ENCODE measurements at regions of chr2 and their contacts with region 1.

Region 1: GRCh38 chr2:55961318-55961911 is 37.8 kb upstream of the EFEMP1 start:
- DNase-seq: peak; percentile 54
- H3K4me3 ChIP-seq: no peak overlapping the region
- H3K27ac ChIP-seq: no peak overlapping the region
- H3K4me1 ChIP-seq: no peaks in the 10 kb centered on the region
- H3K27me3 ChIP-seq: peaks cover 16% of the 10 kb centered on the region
- CTCF ChIP-seq: peak; percentile 74

Region 2: DNA sequence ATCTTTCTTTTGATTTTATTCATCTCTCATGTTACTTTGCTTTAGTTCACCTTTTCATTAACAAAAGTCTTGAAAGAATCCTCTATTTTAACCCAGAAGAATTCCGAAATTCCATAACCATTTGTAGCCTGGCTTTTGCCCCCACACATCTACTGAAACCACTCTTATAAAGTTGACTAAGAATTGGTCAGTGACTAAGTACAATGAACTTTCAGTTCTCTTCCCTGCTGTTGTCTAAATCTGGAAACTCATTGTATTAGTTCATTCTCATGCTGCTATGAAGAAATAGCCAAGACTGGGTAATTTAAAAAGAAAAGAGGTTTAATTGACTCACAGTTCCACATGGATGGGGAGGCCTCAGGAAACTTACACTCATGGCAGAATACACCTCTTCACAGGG is 217.8 kb before region 1 on chr2:
- CTCF ChIA-PET with region 1: no interaction called
- POLR2A ChIA-PET with region 1: no interaction called
- intact Hi-C with region 1: no loop called
- DNase-seq: no peak
- H3K4me3 ChIP-seq: no peak overlapping the region
- H3K27ac ChIP-seq: no peak overlapping the region
- H3K4me1 ChIP-seq: no peaks in the 10 kb centered on the region
- H3K27me3 ChIP-seq: no peaks in the 10 kb centered on the region
- CTCF ChIP-seq: no peak

Region 3: GRCh38 chr2:55771612-55772011 is 189.8 kb before region 1 on chr2:
- CTCF ChIA-PET with region 1: interaction called, 14 read pairs
- POLR2A ChIA-PET with region 1: no interaction called
- intact Hi-C with region 1: loop called (anchors 1 kb)
- DNase-seq: peak; percentile 53
- H3K4me3 ChIP-seq: no peak overlapping the region
- H3K27ac ChIP-seq: no peak overlapping the region
- H3K4me1 ChIP-seq: no peaks in the 10 kb centered on the region
- H3K27me3 ChIP-seq: peaks cover 42% of the 10 kb centered on the region
- CTCF ChIP-seq: peak; percentile 71

Measured in A673 (cell line).